Left cardiac atrium (tissue), 4 donors: ENCODE measurements at regions of chr3 and their contacts with region 1.

Region 1: DNA sequence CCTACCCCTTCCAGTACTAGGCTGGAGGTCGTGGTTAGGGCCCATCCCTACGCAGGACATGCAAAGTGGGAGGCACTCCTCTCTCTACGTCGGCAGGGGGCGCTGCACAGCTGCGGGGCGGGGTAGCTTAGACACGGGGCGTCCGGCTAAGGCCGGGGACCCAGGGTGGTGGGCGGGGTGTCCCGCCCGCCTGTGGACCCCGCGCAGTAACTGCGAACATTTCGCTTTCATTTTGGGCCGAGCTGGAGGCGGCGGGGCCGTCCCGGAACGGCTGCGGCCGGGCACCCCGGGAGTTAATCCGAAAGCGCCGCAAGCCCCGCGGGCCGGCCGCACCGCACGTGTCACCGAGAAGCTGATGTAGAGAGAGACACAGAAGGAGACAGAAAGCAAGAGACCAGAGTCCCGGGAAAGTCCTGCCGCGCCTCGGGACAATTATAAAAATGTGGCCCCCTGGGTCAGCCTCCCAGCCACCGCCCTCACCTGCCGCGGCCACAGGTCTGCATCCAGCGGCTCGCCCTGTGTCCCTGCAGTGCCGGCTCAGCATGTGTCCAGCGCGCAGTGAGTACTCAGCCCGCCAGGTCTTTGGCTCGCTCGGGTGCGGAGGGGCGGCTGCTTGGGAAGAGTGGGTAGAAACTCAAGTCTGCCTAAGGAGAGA is at the start of gene IL12A:
- DNase-seq: peak; percentile 82
- ATAC-seq: peak; percentile 97
- total RNA-seq, gene IL12A: 0.24 to 0.42 TPM

Region 2: GRCh38 chr3:159818399-159818798 is 170.3 kb before region 1 on chr3:
- intact Hi-C with region 1: loop called in 1 of 2 experiments (anchors 5 kb)
- DNase-seq: peak; percentile 31
- ATAC-seq: peak; percentile 42 to 74

Region 3: DNA sequence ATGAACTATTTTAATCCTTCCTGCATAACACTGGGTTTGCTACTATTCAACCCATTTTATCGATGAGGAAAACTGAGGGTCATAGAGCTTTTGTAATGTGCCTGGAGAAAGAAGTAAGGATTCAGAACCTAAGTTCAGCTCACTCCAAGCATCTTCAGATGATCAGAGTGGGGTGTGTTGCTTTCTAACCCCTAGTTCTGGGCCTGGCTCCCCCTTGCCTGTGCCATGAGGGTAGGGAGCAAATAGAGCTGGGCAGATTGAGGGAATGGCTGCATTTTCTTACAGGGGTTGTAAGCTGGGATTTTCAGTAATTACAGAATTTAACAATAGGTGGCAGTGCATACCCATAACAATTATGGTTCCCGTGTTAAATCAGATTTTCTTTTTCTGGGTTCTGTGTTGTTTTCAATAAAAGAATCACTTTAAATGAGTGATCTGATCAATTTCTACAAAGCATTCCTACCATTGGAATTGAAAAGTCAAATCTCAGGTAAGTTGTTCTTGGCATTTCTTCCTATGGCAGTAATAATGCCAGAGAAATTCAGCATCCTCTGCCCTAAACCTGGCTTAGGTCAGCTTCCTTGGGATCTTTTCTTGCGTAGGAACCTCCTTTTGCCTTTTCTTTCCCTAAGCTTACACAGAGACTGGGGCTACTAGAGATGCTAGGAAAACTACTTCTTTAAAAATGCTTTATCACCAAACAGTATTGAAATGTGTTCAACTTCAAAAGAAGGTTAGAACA is 103.9 kb before region 1 on chr3:
- intact Hi-C with region 1: loop called in 1 of 2 experiments (anchors 5 kb)
- DNase-seq: no peak
- ATAC-seq: no peak

Region 4: GRCh38 chr3:159897331-159898075 is 91.2 kb before region 1 on chr3:
- intact Hi-C with region 1: loop called in 1 of 2 experiments (anchors 5 kb)
- DNase-seq: no peak
- ATAC-seq: peak; percentile 40 to 46